Naive thymus-derived CD4-positive, alpha-beta T cell (primary cell): ENCODE measurements at regions of chr17 and their contacts with region 1.

Region 1: DNA sequence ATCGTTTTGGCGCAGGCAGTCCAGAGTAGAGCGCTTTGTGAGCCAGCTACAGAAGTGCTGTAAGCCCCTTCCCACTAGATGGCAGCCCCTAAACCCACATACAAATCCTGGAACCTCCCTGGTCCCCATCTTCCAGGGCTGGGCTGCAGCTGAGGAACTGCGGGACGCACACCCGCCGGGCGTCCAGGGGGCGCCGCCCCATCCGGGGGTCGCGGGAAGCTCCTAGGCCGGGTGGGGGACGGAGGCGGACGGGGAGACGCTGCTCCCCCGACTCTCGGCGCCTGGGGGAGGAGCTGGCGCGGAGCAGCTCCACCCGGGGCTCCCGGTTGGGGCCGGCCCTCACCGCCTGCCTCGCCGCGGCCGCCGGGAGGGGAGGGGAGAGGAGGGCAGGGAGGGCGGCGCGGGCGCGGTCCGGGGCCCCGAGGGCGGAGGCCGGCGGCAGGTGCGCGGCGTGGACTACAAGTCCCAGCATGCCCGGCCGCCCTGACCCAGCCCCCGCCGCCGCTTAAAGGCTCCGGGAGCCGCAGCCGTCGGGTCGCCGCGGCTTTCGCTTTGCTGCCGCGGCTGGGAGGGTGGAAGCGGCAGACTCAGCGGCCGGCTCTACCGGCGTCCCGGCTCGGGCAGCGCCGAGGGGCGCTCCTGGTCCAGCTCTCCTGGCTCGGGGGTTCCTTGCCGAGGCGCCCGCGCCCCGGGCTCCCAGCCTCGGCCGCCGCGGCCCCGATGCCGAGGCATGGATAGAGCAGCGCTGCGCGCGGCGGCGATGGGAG is at the start of gene KSR1:
- DNase-seq: peak; percentile 66 to 86 (median 76)
- ATAC-seq: peak; percentile 95
- H3K4me3 ChIP-seq: peak within 1 kb of the TSS; percentile 71
- H3K4me3 Mint-ChIP-seq: peak within 1 kb of the TSS; percentile 79 to 96 (median 90)
- H3K27ac ChIP-seq: peak within 1 kb of the TSS; percentile 65
- H3K27ac Mint-ChIP-seq: peak within 1 kb of the TSS; percentile 62 to 95 (median 85)
- H3K4me1 ChIP-seq: peaks cover 10 to 13% of the 10 kb centered on the region in 2 donors
- H3K4me1 Mint-ChIP-seq: peaks cover 5 to 49% (median 21%) of the 10 kb centered on the region in 7 donors
- H3K27me3 ChIP-seq: no peaks in the 10 kb centered on the region
- H3K27me3 Mint-ChIP-seq: no peaks in the 10 kb centered on the region
- total RNA-seq, gene KSR1: 22.5 to 96.4 (median 27.8) TPM

Region 2: DNA sequence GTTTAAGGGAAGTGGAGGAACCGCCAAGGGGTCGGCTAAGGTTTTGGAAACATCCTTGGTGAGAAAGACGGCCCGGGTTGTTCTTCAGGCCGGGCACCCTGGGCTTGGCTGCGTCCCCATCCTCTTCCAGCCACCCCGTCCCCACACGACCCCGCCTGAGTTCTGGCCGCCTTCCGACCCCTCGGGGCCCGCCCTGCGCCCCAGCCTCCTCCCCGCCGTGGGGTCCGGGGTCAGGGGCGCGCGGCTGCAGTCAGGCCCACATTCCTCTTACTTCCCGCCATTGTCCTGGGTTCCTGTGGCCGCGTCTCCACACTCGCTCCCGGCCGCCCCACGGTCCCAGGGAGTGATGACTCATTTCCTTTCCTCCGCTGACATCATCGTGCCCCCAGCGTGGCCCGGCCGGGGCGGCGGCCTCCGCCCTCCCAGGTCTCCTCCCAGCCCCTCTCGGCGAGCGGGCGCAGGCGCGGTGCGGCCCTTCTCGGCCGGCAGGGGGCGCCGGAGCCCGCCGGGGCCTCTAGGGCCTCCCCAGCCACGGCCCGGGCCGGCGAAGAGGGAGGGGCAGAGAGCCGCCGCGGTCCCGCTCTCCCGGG is 102.5 kb before region 1 on chr17:
- CTCF ChIA-PET with region 1: no interaction called
- POLR2A ChIA-PET with region 1: no interaction called
- intact Hi-C with region 1: loop called (anchors 1 kb)
- DNase-seq: peak; percentile 68 to 95 (median 77)
- ATAC-seq: peak; percentile 96
- H3K4me3 ChIP-seq: peak overlapping the region; percentile 85
- H3K4me3 Mint-ChIP-seq: peak overlapping the region; percentile 30 to 93 (median 78)
- H3K27ac ChIP-seq: peak overlapping the region; percentile 83
- H3K27ac Mint-ChIP-seq: peak overlapping the region; percentile 46 to 94 (median 79)
- H3K4me1 ChIP-seq: peaks cover 3 to 12% of the 10 kb centered on the region in 2 donors
- H3K4me1 Mint-ChIP-seq: peaks cover 12 to 31% (median 21%) of the 10 kb centered on the region in 7 donors
- H3K27me3 ChIP-seq: no peaks in the 10 kb centered on the region
- H3K27me3 Mint-ChIP-seq: no peaks in the 10 kb centered on the region

Region 3: GRCh38 chr17:27367121-27367991 is 88.7 kb before region 1 on chr17:
- CTCF ChIA-PET with region 1: no interaction called
- POLR2A ChIA-PET with region 1: no interaction called
- intact Hi-C with region 1: no loop called
- DNase-seq: no peak
- ATAC-seq: peak; percentile 18
- H3K4me3 ChIP-seq: no peak overlapping the region
- H3K4me3 Mint-ChIP-seq: no peak overlapping the region
- H3K27ac ChIP-seq: no peak overlapping the region
- H3K27ac Mint-ChIP-seq: peak overlapping the region in 1 of 9 donors; percentile 66
- H3K4me1 ChIP-seq: no peaks in the 10 kb centered on the region
- H3K4me1 Mint-ChIP-seq: no peaks in the 10 kb centered on the region
- H3K27me3 ChIP-seq: no peaks in the 10 kb centered on the region
- H3K27me3 Mint-ChIP-seq: peaks cover 0 to 11% (median 0%) of the 10 kb centered on the region in 5 donors

Region 4: GRCh38 chr17:27473748-27474609 is 17.9 kb after region 1 on chr17:
- CTCF ChIA-PET with region 1: interaction called, 4 read pairs
- POLR2A ChIA-PET with region 1: interaction called, 3 read pairs
- intact Hi-C with region 1: loop called (anchors 1 kb)
- DNase-seq: peak in 6 of 9 donors; percentile 12 to 76 (median 18)
- ATAC-seq: peak; percentile 85
- H3K4me3 ChIP-seq: peak overlapping the region; percentile 11
- H3K4me3 Mint-ChIP-seq: peak overlapping the region; percentile 16 to 86 (median 64)
- H3K27ac ChIP-seq: peak overlapping the region; percentile 43
- H3K27ac Mint-ChIP-seq: peak overlapping the region; percentile 76 to 97 (median 89)
- H3K4me1 ChIP-seq: peaks cover 19 to 44% of the 10 kb centered on the region in 2 donors
- H3K4me1 Mint-ChIP-seq: peaks cover 41 to 89% (median 49%) of the 10 kb centered on the region in 7 donors
- H3K27me3 ChIP-seq: no peaks in the 10 kb centered on the region
- H3K27me3 Mint-ChIP-seq: no peaks in the 10 kb centered on the region

Region 5: GRCh38 chr17:27544350-27545131 is 88.4 kb after region 1 on chr17:
- CTCF ChIA-PET with region 1: no interaction called
- POLR2A ChIA-PET with region 1: no interaction called
- intact Hi-C with region 1: loop called in 1 of 2 experiments (anchors 1 kb)
- DNase-seq: peak in 1 of 9 donors; percentile 78
- ATAC-seq: peak; percentile 71
- H3K4me3 ChIP-seq: no peak overlapping the region
- H3K4me3 Mint-ChIP-seq: peak overlapping the region in 6 of 10 donors; percentile 9 to 80 (median 30)
- H3K27ac ChIP-seq: no peak overlapping the region
- H3K27ac Mint-ChIP-seq: peak overlapping the region in 5 of 9 donors; percentile 16 to 92 (median 19)
- H3K4me1 ChIP-seq: peaks cover 15 to 19% of the 10 kb centered on the region in 2 donors
- H3K4me1 Mint-ChIP-seq: peaks cover 18 to 79% (median 35%) of the 10 kb centered on the region in 7 donors
- H3K27me3 ChIP-seq: no peaks in the 10 kb centered on the region
- H3K27me3 Mint-ChIP-seq: peaks cover 0 to 3% (median 0%) of the 10 kb centered on the region in 5 donors

Region 6: DNA sequence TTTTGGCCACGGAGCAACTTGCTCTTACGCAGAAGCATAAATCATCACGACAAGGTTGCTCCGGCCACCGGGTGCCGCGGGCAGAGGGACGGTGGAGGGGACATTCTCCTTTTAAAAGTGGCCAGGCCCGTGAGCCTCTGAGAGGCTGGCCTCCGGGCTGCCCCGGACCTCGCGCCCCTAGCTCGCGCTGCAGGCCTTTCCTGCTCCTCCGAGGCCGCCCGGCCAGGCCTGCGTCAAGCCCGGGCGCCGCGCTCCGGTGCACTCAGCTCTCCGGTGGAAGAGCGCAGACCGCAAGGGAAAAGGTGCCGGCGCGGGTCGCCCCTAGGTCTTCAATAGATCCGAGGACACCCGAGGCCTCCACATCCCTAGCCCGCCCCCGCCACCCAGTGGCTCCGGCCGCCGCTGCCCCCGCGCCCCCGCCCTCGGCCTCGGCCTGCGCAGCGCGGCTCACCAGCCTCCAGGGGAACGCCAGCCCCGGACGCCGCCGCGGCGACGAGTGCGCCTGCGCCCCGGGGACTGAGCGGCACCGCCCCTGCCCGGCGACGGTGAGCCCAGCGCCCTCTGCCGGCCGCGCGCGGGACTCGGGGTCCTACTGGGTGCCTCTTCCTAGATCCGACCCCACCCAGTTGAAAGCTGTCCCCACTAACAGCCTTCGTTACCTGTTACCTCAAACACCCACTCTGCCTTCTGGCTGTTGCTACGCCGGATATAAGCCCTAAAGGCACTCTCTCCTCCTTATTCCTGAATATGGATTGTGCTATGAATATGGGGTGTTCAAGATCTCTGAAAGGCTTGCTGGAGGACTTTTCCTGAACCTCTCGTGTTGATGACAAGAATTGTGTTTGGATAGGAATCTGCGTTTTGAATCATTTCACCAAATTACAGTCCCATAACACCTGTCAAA is 437.0 kb after region 1 on chr17 and contains the start of gene LYRM9:
- CTCF ChIA-PET with region 1: no interaction called
- POLR2A ChIA-PET with region 1: no interaction called
- intact Hi-C with region 1: loop called in 1 of 2 experiments (anchors 2 kb)
- DNase-seq: peak; percentile 87 to 99 (median 93)
- ATAC-seq: peak; percentile 100
- H3K4me3 ChIP-seq: peak within 1 kb of the TSS; percentile 80
- H3K4me3 Mint-ChIP-seq: peak within 1 kb of the TSS; percentile 76 to 95 (median 88)
- H3K27ac ChIP-seq: peak within 1 kb of the TSS; percentile 73
- H3K27ac Mint-ChIP-seq: peak within 1 kb of the TSS; percentile 69 to 89 (median 84)
- H3K4me1 ChIP-seq: peaks cover 0 to 13% of the 10 kb centered on the region in 2 donors
- H3K4me1 Mint-ChIP-seq: peaks cover 15 to 29% (median 26%) of the 10 kb centered on the region in 7 donors
- H3K27me3 ChIP-seq: no peaks in the 10 kb centered on the region
- H3K27me3 Mint-ChIP-seq: peaks cover 15 to 45% (median 19%) of the 10 kb centered on the region in 5 donors
- total RNA-seq, gene LYRM9: 4.2 to 24.5 (median 14.0) TPM